ENCODE measurements at regions of chr3 and their contacts with region 1.

Region 1: DNA sequence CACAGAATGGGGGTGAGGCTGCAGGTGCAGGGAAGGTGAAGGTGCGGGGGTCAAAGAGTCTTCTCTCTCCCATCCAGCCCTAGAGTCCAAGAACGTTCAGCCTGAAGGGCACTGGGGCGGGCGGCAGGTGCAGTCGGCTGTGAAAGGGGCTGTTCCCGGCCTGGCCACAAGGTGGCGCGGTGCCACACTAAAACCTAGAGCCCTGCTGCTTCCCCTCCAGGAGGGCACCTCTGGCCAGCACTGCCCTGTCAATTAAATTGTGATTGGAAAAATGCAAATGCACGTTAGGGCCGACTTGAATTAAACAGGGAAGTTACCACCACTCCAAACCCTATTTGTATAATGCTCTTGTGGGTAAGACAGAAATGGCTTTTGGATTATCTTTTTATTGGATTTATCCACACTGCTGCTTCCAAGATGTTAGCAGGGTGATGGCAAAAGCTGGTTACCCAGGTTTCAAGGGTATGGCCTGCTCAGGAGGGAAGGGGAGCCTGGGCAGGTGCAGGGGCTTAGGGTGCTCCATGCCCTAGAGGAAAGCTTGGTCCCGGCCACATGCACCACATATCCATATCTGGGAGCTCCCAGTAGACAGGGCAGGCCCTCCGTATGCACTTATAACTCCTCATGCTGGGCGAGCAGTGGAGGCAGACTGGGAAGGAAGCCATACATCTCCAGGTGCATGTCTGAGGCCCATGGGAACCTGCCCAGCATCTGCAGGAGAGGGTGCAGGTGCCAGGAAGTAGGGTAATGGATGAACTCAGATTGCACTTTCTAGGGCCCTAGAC is 119.8 kb downstream of the ADCY5 start:
- DNase-seq: peak; percentile 67 to 92 (median 88)
- ATAC-seq: peak; percentile 91
- H3K4me3 ChIP-seq: no peak overlapping the region
- H3K4me1 ChIP-seq: no peaks in the 10 kb centered on the region
- CTCF ChIP-seq: peak; percentile 92

Region 2: DNA sequence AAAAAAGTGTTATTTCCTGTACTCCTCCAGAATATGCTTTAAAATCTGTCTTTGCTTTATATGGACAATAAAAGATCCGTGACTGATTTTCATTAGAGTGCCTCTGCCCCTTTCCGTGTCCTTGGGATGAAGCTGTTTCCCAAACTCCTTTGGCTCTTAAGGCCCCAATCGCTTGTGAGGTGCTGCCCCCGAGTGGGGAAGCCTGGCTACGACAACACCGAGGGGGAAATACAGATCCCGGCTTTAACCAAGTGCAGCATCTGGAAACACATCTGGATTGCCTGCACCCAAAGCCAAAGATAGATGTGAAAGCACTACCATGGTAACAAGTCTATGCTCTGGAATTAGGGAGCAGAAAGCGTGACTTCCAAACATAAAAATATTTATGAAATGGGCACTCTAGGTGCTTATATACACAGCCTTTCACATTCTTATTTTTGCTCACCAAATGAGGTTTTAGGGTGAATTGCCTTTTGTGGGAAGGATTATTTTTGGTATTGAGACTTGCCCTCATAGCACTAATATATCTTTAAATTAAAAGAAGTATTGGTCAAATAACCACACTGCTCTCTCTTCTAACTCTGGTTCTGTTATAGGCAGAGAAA is 160.5 kb after region 1 on chr3:
- intact Hi-C with region 1: loop called (anchors 2 to 5 kb)
- DNase-seq: peak in 2 of 3 donors; percentile 78 to 80
- ATAC-seq: peak; percentile 84
- H3K4me3 ChIP-seq: no peak overlapping the region
- H3K4me1 ChIP-seq: no peaks in the 10 kb centered on the region
- CTCF ChIP-seq: peak; percentile 59

Region 3: GRCh38 chr3:123559040-123559861 is 230.2 kb after region 1 on chr3:
- intact Hi-C with region 1: loop called (anchors 5 to 10 kb)
- DNase-seq: peak in 1 of 3 donors; percentile 56
- ATAC-seq: peak; percentile 57
- H3K4me3 ChIP-seq: no peak overlapping the region
- H3K4me1 ChIP-seq: no peaks in the 10 kb centered on the region
- CTCF ChIP-seq: peak; percentile 42